HepG2 (cell line): ENCODE measurements at regions of chr5 and their contacts with region 1.

Region 1: DNA sequence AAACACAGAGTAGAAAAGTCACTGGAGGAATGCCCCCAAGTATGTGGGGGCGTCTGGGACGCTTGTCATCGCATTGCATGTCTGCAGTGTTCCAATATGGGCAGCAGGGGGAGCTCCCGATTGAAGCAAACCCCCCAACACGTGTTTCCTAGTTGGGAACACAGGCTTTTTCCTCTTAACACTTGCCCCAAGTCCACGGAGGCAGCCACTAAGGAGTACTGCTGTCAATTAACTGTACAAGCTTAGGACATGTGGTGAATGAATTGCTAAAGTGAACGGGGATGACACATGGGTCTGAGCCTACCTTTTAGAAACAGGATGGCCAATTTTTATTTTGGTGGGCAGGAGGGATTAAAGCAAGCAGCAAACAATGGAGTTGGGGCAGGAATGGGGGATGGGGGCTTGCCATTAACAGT is 2.2 kb downstream of the GABRB2 start:
- DNase-seq: peak; percentile 30
- ATAC-seq: peak; percentile 76
- H3K4me3 ChIP-seq: no peak overlapping the region
- H3K27ac ChIP-seq: no peak overlapping the region
- H3K4me1 ChIP-seq: no peaks in the 10 kb centered on the region
- H3K27me3 ChIP-seq: peaks cover 0 to 27% of the 10 kb centered on the region in 2 experiments; a peak in 3 of 5 replicates
- CTCF ChIP-seq: peak; percentile 76
- EP300 ChIP-seq: no peak
- POLR2A ChIP-seq: no peak
- RAD21 ChIP-seq: 0 out of 2 replicates have a peak, but pooled peaks have one; percentile 27

Region 2: GRCh38 chr5:161212123-161212712 is 332.1 kb before region 1 on chr5:
- CTCF ChIA-PET with region 1: no interaction called
- POLR2A ChIA-PET with region 1: no interaction called
- in situ Hi-C with region 1: no loop called
- intact Hi-C with region 1: no loop called
- DNase-seq: no peak
- ATAC-seq: no peak
- H3K4me3 ChIP-seq: no peak overlapping the region
- H3K27ac ChIP-seq: no peak overlapping the region
- H3K4me1 ChIP-seq: no peaks in the 10 kb centered on the region
- H3K27me3 ChIP-seq: no peaks in the 10 kb centered on the region
- CTCF ChIP-seq: no peak
- EP300 ChIP-seq: no peak
- POLR2A ChIP-seq: no peak
- RAD21 ChIP-seq: no peak

Region 3: GRCh38 chr5:161676103-161676502 is 131.7 kb after region 1 on chr5:
- CTCF ChIA-PET with region 1: no interaction called
- POLR2A ChIA-PET with region 1: no interaction called
- in situ Hi-C with region 1: no loop called
- intact Hi-C with region 1: loop called (anchors 5 kb)
- DNase-seq: peak; percentile 6
- ATAC-seq: peak; percentile 88
- H3K4me3 ChIP-seq: no peak overlapping the region
- H3K27ac ChIP-seq: no peak overlapping the region
- H3K4me1 ChIP-seq: no peaks in the 10 kb centered on the region
- H3K27me3 ChIP-seq: no peaks in the 10 kb centered on the region
- CTCF ChIP-seq: peak; percentile 20; the same call in 1 of the 2 replicates
- EP300 ChIP-seq: no peak
- POLR2A ChIP-seq: no peak
- RAD21 ChIP-seq: no peak

Region 4: GRCh38 chr5:161925960-161926359 is 381.6 kb after region 1 on chr5:
- CTCF ChIA-PET with region 1: no interaction called
- POLR2A ChIA-PET with region 1: no interaction called
- in situ Hi-C with region 1: no loop called
- intact Hi-C with region 1: loop called (anchors 10 kb)
- DNase-seq: no peak
- ATAC-seq: no peak
- H3K4me3 ChIP-seq: no peak overlapping the region
- H3K27ac ChIP-seq: no peak overlapping the region
- H3K4me1 ChIP-seq: no peaks in the 10 kb centered on the region
- H3K27me3 ChIP-seq: no peaks in the 10 kb centered on the region
- CTCF ChIP-seq: no peak
- EP300 ChIP-seq: no peak
- POLR2A ChIP-seq: no peak
- RAD21 ChIP-seq: no peak

Region 5: GRCh38 chr5:161988077-161988476 is 443.7 kb after region 1 on chr5:
- CTCF ChIA-PET with region 1: no interaction called
- POLR2A ChIA-PET with region 1: no interaction called
- in situ Hi-C with region 1: no loop called
- intact Hi-C with region 1: no loop called
- DNase-seq: no peak
- ATAC-seq: no peak
- H3K4me3 ChIP-seq: no peak overlapping the region
- H3K27ac ChIP-seq: no peak overlapping the region
- H3K4me1 ChIP-seq: no peaks in the 10 kb centered on the region
- H3K27me3 ChIP-seq: no peaks in the 10 kb centered on the region
- CTCF ChIP-seq: no peak
- EP300 ChIP-seq: no peak
- POLR2A ChIP-seq: no peak
- RAD21 ChIP-seq: no peak

Region 6: DNA sequence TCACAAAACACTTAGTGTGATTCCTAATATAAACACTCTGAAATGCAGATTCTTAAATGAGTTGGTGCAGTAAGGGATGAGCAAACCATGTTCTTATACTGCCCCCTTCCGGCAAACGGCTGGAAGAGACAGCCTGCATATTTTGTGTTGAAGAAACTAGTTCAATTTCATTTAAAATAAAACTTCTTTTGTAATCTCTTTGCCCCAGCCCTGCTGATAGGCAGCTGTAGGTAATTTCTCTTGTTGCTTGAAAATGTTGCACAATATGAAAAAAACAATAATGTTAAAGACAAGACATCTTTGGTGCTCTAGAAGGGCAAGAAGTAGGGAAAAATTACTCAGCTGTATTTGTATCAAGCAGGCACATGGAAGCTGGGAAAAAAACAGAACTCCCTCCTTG is 1803.3 kb after region 1 on chr5:
- CTCF ChIA-PET with region 1: no interaction called
- POLR2A ChIA-PET with region 1: no interaction called
- in situ Hi-C with region 1: no loop called
- intact Hi-C with region 1: loop called (anchors 1 kb)
- DNase-seq: peak; percentile 59
- ATAC-seq: peak; percentile 76
- H3K4me3 ChIP-seq: no peak overlapping the region
- H3K27ac ChIP-seq: no peak overlapping the region
- H3K4me1 ChIP-seq: no peaks in the 10 kb centered on the region
- H3K27me3 ChIP-seq: no peaks in the 10 kb centered on the region
- CTCF ChIP-seq: peak; percentile 75
- EP300 ChIP-seq: no peak
- POLR2A ChIP-seq: no peak
- RAD21 ChIP-seq: 0 out of 2 replicates have a peak, but pooled peaks have one; percentile 36

Region 7: GRCh38 chr5:163408311-163408923 is 1864.1 kb after region 1 on chr5:
- CTCF ChIA-PET with region 1: interaction called, 8 read pairs
- POLR2A ChIA-PET with region 1: no interaction called
- in situ Hi-C with region 1: loop called (anchors 25 kb)
- intact Hi-C with region 1: no loop called
- DNase-seq: peak; percentile 20
- ATAC-seq: peak; percentile 91
- H3K4me3 ChIP-seq: no peak overlapping the region
- H3K27ac ChIP-seq: no peak overlapping the region
- H3K4me1 ChIP-seq: no peaks in the 10 kb centered on the region
- H3K27me3 ChIP-seq: no peaks in the 10 kb centered on the region
- CTCF ChIP-seq: peak; percentile 82
- EP300 ChIP-seq: no peak
- POLR2A ChIP-seq: no peak
- RAD21 ChIP-seq: peak; percentile 66